ENCODE measurements at regions of chr2 and their contacts with region 1.

Region 1: GRCh38 chr2:55961318-55961911 is 37.8 kb upstream of the EFEMP1 start:
- DNase-seq: peak in 1 of 2 donors; percentile 71
- H3K4me3 ChIP-seq: no peak overlapping the region
- H3K27ac ChIP-seq: no peak overlapping the region
- H3K4me1 ChIP-seq: peaks cover 3 to 12% (median 8%) of the 10 kb centered on the region in 4 donors
- H3K27me3 ChIP-seq: no peaks in the 10 kb centered on the region
- CTCF ChIP-seq: peak in 4 of 7 experiments; percentile 23 to 65 (median 44)
- EP300 ChIP-seq: no peak
- POLR2A ChIP-seq: no peak

Region 2: DNA sequence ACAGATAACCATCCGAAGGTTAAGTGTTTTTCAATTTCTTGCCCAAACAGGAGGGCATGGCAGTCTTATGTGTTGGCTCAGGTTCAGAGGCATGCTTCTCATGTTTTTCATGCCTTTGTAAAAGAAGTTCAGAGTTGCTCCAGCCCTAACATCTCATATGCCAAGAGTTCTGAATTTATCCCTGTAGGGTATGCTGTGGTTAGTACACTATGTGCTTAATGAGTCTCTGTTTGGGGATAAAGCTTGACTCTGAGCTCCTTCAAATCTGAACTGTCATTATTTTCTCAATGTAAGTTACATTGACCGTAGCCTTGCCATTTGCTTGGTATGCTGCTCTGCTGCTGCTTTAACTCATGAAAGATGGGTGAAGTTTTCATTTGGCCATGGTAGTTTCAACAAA is 199.9 kb before region 1 on chr2:
- intact Hi-C with region 1: loop called (anchors 10 kb)
- DNase-seq: no peak
- H3K4me3 ChIP-seq: no peak overlapping the region
- H3K27ac ChIP-seq: peak overlapping the region in 3 of 5 donors; percentile 42 to 46 (median 44)
- H3K4me1 ChIP-seq: no peaks in the 10 kb centered on the region
- H3K27me3 ChIP-seq: no peaks in the 10 kb centered on the region
- CTCF ChIP-seq: no peak
- EP300 ChIP-seq: no peak
- POLR2A ChIP-seq: no peak

Region 3: GRCh38 chr2:56009758-56010458 is 48.5 kb after region 1 on chr2:
- intact Hi-C with region 1: no loop called
- DNase-seq: peak in 1 of 2 donors; percentile 67
- H3K4me3 ChIP-seq: no peak overlapping the region
- H3K27ac ChIP-seq: no peak overlapping the region
- H3K4me1 ChIP-seq: peaks cover 0 to 7% (median 0%) of the 10 kb centered on the region in 4 donors
- H3K27me3 ChIP-seq: no peaks in the 10 kb centered on the region
- CTCF ChIP-seq: peak in 4 of 7 experiments; percentile 21 to 49 (median 38)
- EP300 ChIP-seq: no peak
- POLR2A ChIP-seq: no peak

Region 4: GRCh38 chr2:56025469-56026193 is 64.2 kb after region 1 on chr2:
- intact Hi-C with region 1: no loop called
- DNase-seq: no peak
- H3K4me3 ChIP-seq: no peak overlapping the region
- H3K27ac ChIP-seq: no peak overlapping the region
- H3K4me1 ChIP-seq: no peaks in the 10 kb centered on the region
- H3K27me3 ChIP-seq: no peaks in the 10 kb centered on the region
- CTCF ChIP-seq: no peak
- EP300 ChIP-seq: no peak
- POLR2A ChIP-seq: no peak